Psoas muscle (tissue), 8 donors: ENCODE measurements at regions of chr11 and their contacts with region 1.

Region 1: DNA sequence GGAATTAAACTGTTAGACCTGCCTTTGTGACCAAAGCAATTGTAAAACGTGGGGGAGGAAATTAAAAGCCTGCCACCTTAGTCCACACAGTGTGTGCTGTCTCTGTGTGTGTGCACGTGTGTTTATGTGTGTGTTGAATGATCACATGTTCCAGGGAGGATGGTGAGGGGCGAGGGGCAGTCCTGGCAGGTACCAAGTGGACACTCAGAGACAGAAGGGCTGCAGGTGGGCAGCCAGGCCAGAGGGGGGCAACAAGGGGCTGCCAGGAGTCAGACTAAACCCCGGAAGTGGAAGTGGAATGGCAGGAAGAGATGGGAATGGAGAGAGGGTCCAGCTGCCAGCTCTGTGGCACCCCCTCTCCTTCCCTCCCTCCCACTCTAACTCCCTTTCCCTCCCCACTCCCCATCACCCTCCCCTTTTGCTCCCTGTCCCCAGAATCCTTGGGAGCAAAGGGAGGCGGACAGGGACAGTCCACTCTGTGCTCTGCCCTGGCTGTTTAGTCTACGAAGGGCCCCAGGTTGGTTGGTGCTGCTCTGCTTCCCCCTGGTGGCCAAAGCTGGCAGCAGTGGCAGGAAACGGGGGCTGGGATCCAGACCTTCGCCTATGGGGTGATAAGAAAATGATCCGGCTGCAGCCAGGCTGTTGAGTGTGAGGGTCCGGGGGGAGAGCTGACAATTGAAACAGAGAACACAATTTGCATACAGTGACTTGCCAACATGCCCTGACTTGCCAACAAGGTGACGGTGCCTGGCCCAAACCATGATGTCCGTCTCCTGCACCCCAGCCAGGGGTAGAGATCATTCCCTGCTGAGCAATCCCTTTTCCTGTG is 24.4 kb downstream of the P2RY2 start:
- DNase-seq: peak; percentile 80 to 90
- ATAC-seq: peak; percentile 19 to 49 (median 40)
- H3K4me3 ChIP-seq: no peak overlapping the region
- H3K27ac ChIP-seq: peak overlapping the region; percentile 53
- H3K4me1 ChIP-seq: peaks cover 42% of the 10 kb centered on the region
- H3K27me3 ChIP-seq: no peaks in the 10 kb centered on the region
- CTCF ChIP-seq: peak; percentile 80

Region 2: DNA sequence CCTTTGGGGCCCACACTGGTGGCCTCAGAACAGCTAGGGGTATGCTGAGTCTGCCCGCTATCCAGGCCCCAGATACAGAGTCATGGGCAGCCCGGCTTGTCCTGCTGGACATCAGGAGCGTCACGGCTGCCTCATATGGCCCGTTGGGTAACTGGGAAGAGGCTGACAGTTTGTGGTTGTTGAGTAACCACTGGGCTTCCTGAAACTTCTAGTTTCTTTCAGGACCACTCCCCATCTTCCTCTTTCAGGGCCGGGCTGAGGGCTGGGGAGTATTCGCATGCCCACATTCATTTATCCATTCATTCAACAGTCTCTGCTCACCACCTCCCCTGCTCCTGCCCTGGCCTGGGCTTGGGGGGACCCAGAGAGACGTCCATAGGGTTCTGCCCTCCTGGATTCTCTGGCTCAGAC is 37.7 kb before region 1 on chr11:
- intact Hi-C with region 1: loop called in 1 of 2 experiments (anchors 5 kb)
- DNase-seq: peak in 1 of 2 donors; percentile 63
- ATAC-seq: peak in 1 of 4 donors; percentile 18
- H3K4me3 ChIP-seq: no peak overlapping the region
- H3K27ac ChIP-seq: no peak overlapping the region
- H3K4me1 ChIP-seq: peaks cover 14% of the 10 kb centered on the region
- H3K27me3 ChIP-seq: no peaks in the 10 kb centered on the region
- CTCF ChIP-seq: no peak

Region 3: DNA sequence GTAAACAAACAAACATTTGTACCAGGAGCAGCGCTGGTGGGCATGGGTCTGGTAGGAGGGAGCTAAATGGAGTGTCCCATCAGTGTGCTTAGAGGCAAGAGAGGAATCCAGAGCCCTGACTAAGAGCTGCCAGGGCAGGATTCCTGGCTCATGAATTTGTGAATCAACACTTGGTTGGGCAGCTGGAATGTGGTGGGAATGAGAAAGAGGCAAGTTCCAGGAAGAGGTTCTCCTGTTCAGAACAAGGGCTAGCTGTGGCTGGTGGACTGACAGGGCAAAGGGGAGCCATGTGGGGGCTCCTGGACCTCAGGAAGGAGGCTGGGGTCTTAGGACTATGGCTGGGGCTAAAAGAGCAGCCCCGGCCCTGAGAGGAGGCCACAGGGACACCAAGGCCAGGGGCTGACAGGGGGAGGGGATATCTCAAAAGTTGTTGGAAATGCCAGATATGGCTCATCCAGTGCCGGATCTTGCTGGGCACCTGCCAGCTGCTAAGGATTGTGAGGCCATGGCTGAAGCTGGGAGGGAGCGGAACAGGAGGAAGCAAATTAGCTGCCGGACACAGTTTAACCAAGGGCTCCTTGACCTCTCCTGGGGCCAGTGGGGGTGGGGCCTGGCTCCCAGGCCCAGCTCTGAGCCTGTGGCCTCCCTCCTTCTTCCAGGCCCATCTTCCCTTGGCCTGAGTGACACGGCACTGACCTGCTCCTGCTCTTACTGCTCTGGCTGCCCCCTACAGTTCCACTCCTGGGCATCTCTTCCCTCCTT is 15.1 kb after region 1 on chr11:
- intact Hi-C with region 1: no loop called
- DNase-seq: peak in 1 of 2 donors; percentile 60
- ATAC-seq: peak; percentile 41 to 81 (median 77)
- H3K4me3 ChIP-seq: no peak overlapping the region
- H3K27ac ChIP-seq: peak overlapping the region; percentile 77
- H3K4me1 ChIP-seq: peaks cover 17% of the 10 kb centered on the region
- H3K27me3 ChIP-seq: no peaks in the 10 kb centered on the region
- CTCF ChIP-seq: no peak

Region 4: DNA sequence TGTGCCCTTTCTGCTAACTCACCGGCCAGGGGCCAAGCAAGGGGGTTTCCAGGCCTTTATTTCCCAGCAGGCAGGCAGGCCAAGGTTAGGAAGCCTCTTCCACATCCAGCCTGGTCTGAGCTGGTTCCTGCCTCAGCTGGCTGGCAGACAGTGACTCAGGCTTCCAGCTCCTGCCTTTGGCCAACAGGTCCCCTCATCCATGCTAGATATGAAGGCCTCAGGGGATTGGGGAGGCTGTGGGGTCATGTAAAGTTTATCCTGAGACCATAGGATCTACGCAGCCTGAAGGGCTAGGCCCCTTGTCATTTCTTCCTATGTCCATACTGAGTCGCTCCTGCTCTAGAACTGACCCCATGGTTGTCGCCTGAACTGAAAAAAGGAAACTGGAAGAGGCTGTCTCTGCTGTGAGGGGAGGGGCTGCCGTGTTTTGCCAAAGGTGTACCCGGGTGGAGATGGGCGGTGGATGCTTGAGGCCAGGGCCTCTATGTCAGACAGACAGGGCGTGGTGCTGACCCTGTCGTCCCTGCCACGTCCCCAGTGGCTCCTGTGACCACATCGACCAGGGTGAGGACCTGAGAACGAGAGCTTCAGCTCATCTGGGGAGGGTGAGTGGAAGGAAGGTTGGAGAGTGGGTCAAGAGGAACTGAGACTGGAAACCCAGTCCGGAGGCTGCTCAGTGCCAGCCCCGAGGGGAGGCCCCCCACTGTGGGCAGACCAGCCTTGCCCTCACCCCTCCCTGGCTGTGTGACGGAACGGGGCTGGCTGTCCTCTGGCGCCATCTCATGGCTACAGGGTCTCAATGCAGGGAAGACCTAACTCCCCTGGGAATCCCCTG is 46.6 kb after region 1 on chr11:
- intact Hi-C with region 1: loop called (anchors 5 kb)
- DNase-seq: peak; percentile 69 to 85
- ATAC-seq: peak; percentile 82 to 91 (median 90)
- H3K4me3 ChIP-seq: peak overlapping the region; percentile 46
- H3K27ac ChIP-seq: peak overlapping the region; percentile 32
- H3K4me1 ChIP-seq: peaks cover 6% of the 10 kb centered on the region
- H3K27me3 ChIP-seq: no peaks in the 10 kb centered on the region
- CTCF ChIP-seq: peak; percentile 95

Region 5: DNA sequence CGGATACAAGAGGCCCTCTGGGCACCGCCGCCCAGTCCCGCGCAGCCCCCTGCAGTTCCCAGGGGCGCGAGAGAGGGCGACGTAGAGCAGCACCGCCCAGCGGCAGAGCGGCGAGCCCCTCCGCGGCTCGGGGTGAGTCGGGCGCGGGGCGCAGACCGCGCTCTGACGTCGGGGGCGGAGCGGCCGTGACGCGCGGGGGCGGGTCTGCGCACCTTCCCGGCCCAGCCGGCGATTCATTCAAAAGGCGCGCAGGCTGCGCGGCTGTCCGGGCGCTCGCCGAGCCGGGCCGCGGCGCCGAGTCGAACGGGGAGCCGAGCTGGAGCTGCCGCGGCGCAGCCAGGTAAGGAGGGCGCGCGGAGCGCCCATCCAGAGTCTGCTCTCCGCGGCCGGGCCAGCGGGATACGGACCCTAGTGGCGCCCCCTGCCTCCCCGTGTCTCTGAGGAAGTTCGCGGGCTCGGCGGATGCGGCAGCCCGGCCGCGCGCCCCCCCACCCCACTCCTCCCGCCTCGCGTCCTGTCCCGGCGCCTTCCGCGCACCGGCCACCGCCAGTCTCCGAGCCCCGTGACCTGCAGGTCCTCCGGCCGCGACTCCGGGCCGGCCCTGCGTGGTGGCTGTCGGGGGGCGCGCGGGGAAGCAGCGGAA is 133.8 kb after region 1 on chr11 and contains the start of gene RELT:
- intact Hi-C with region 1: no loop called
- DNase-seq: peak; percentile 90 to 95
- ATAC-seq: peak; percentile 85 to 90 (median 86)
- H3K4me3 ChIP-seq: peak within 1 kb of the TSS; percentile 89
- H3K27ac ChIP-seq: peak within 1 kb of the TSS; percentile 97
- H3K4me1 ChIP-seq: peaks cover 44% of the 10 kb centered on the region
- H3K27me3 ChIP-seq: no peaks in the 10 kb centered on the region
- CTCF ChIP-seq: peak; percentile 93
- total RNA-seq, gene RELT: 9.0 to 33.0 (median 17.2) TPM

Region 6: DNA sequence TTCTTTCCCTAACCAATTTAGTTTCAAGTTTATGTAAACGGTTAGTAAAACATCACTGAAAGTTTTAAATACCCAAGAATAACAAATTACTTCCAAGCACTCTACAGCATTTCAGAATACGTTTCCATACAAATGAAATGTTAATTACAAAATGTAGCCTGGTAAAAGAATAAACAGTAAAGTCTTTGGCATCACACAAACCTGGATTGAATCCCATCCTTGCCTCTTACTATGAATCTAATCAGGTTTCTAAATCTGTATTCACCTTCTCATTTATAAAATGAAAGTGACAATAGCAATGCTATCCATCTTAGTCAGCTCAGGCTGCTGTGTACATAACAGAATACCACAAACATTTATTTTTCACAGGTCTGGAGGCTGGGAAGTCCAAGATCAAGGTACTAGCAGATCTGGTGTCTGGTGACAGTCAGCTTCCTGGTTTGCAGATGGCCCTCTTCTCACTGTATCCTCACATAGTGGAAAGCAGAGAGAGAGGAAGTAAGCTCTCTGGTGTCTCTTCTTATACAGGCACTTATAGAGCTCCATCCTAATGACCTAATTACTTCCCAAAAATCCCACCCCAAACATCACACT is 336.2 kb after region 1 on chr11:
- intact Hi-C with region 1: no loop called
- DNase-seq: no peak
- ATAC-seq: peak in 2 of 4 donors; percentile 32 to 37
- H3K4me3 ChIP-seq: no peak overlapping the region
- H3K27ac ChIP-seq: no peak overlapping the region
- H3K4me1 ChIP-seq: peaks cover 8% of the 10 kb centered on the region
- H3K27me3 ChIP-seq: no peaks in the 10 kb centered on the region
- CTCF ChIP-seq: no peak